PC-3 (cell line): ENCODE measurements at regions of chr3 and their contacts with region 1.

Region 1: GRCh38 chr3:97658668-97659285 is 105.8 kb upstream of the ARL6 start:
- DNase-seq: peak; percentile 61
- ATAC-seq: peak; percentile 73
- H3K4me3 ChIP-seq: no peak overlapping the region
- H3K27ac ChIP-seq: no peak overlapping the region
- H3K4me1 ChIP-seq: no peaks in the 10 kb centered on the region
- H3K27me3 ChIP-seq: no peaks in the 10 kb centered on the region
- CTCF ChIP-seq: peak; percentile 91

Region 2: DNA sequence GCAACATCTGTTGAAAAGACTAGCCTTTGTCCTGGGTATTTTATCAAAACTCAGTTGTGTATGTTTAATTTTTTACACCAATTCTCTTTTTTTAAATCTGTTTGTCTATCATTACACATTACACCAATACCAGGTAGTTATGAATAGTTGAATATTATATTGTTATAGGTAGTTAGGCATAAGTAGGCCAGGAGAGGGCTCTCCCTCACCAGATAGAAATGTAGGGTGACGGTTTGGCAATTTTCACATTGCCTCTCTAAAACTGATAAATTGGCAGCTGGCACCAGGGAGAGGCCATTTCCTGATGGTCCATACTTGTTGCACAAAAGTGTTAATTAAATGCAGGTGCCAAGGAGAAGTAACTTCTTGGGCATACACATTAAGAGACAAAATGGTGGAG is 1327.4 kb before region 1 on chr3:
- CTCF ChIA-PET with region 1: no interaction called
- POLR2A ChIA-PET with region 1: no interaction called
- intact Hi-C with region 1: loop called (anchors 10 kb)
- DNase-seq: peak; percentile 59
- ATAC-seq: peak; percentile 75
- H3K4me3 ChIP-seq: no peak overlapping the region
- H3K27ac ChIP-seq: no peak overlapping the region
- H3K4me1 ChIP-seq: peaks cover 6% of the 10 kb centered on the region; the same call in 1 of the 2 replicates
- H3K27me3 ChIP-seq: no peaks in the 10 kb centered on the region
- CTCF ChIP-seq: peak; percentile 75

Region 3: DNA sequence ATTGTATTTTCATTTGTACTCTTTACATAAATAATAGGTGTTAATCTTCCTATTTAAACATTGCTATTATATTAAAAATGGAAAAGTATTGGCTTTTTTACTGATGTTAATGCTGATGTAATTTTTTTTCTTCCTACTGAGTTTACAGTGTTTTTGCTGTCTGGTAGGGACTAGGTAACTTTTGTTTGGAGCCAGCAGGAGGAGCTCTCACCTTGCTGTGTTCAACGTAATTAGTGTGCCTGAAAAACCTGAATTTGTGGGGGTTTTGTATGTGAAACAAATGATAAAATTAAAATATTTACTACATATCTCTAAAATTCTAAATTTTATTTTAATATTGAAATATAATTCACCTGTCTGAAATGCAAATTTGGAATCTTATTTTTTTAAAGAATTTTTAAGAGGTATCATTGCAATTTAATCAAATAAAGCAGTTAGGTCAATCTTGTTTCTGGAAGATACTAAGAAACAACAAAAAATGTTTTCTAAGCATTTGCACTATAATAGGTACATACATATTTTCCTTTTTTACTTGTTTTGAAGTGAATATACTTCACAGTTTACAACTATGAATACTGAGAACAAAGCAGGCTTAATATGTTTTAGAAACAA is 795.5 kb before region 1 on chr3:
- CTCF ChIA-PET with region 1: no interaction called
- POLR2A ChIA-PET with region 1: no interaction called
- intact Hi-C with region 1: loop called (anchors 1 kb)
- DNase-seq: peak; percentile 63
- ATAC-seq: peak; percentile 67
- H3K4me3 ChIP-seq: no peak overlapping the region
- H3K27ac ChIP-seq: no peak overlapping the region
- H3K4me1 ChIP-seq: no peaks in the 10 kb centered on the region
- H3K27me3 ChIP-seq: no peaks in the 10 kb centered on the region
- CTCF ChIP-seq: peak; percentile 78

Region 4: DNA sequence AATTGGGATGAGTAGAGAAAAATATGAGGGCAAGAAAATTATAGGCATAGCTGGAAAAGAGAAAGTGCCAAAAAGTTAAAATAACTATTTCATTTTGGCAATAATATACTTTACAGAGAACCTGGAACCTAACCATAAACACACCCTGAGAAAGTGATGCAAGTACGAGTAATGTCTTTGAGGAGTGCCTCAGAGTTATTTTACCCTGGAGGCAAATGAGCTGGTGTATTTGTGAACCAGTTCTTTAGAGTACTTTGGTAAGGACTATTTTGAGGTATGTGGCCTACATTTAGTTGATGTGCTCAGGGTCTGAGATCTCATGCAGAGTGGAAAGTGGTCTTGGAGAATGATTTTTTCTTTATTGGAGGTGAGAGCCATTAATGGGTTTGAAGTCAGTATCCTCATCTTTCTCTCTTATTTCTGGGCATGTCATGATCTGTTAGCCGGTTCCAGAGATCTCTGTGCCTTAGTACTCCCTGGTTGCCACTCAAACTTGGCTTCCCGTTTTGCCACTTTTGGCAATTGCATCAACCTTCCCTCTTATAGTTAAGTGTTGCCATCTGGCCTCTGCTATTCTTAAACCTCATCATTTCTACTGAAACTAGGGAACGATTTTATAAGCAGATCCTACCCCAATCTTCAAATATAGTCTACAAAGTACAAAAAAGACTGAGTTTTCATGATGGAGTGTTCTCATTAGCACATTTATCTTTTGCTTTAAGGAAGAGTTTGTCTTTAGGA is 698.7 kb before region 1 on chr3:
- CTCF ChIA-PET with region 1: no interaction called
- POLR2A ChIA-PET with region 1: no interaction called
- intact Hi-C with region 1: loop called (anchors 5 kb)
- DNase-seq: peak; percentile 80
- ATAC-seq: peak; percentile 92
- H3K4me3 ChIP-seq: no peak overlapping the region
- H3K27ac ChIP-seq: peak overlapping the region; percentile 60
- H3K4me1 ChIP-seq: peaks cover 18% of the 10 kb centered on the region
- H3K27me3 ChIP-seq: no peaks in the 10 kb centered on the region
- CTCF ChIP-seq: no peak

Region 5: DNA sequence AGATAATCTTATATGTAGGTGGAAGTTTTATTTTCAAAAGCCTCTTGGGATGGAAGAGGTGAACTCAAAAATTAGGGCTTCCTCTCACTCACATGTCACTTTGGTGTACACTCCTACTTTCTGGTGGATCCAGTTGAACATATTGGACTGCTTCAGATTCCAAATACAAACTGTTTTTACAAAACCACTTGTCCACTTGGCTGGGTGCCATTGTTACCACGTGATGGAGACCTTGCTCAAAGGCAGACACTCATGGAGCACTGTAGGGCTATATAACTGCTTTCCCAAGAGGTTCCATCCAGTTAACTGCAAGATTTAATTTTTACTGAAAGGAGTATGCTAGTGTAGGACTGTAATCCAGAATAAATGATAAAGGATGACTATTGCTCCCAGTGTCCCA is 537.4 kb before region 1 on chr3:
- CTCF ChIA-PET with region 1: no interaction called
- POLR2A ChIA-PET with region 1: no interaction called
- intact Hi-C with region 1: no loop called
- DNase-seq: no peak
- ATAC-seq: no peak
- H3K4me3 ChIP-seq: no peak overlapping the region
- H3K27ac ChIP-seq: no peak overlapping the region
- H3K4me1 ChIP-seq: no peaks in the 10 kb centered on the region
- H3K27me3 ChIP-seq: no peaks in the 10 kb centered on the region
- CTCF ChIP-seq: no peak

Region 6: DNA sequence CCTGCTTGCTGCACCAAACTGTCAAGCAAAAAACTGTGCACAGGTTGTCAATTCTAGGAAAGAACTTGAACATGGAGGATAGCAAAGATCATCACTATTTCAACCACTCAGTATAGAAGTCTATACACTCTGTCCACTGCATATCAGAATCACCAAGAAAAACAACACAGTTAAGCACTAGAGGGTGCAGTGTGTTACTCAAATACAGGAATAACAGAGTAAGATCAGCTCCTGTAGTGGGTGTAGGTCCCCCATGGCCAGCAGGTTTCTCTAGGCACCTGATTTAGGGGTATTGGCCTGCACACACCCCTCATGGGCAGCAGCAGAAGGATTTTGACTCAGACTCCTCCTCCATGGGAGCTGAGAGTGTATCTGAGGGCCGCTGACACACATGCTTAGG is 380.3 kb before region 1 on chr3:
- CTCF ChIA-PET with region 1: no interaction called
- POLR2A ChIA-PET with region 1: no interaction called
- intact Hi-C with region 1: loop called (anchors 1 kb)
- DNase-seq: no peak
- ATAC-seq: peak; percentile 91
- H3K4me3 ChIP-seq: no peak overlapping the region
- H3K27ac ChIP-seq: no peak overlapping the region
- H3K4me1 ChIP-seq: no peaks in the 10 kb centered on the region
- H3K27me3 ChIP-seq: no peaks in the 10 kb centered on the region
- CTCF ChIP-seq: peak; percentile 23; the same call in 1 of the 2 replicates

Region 7: DNA sequence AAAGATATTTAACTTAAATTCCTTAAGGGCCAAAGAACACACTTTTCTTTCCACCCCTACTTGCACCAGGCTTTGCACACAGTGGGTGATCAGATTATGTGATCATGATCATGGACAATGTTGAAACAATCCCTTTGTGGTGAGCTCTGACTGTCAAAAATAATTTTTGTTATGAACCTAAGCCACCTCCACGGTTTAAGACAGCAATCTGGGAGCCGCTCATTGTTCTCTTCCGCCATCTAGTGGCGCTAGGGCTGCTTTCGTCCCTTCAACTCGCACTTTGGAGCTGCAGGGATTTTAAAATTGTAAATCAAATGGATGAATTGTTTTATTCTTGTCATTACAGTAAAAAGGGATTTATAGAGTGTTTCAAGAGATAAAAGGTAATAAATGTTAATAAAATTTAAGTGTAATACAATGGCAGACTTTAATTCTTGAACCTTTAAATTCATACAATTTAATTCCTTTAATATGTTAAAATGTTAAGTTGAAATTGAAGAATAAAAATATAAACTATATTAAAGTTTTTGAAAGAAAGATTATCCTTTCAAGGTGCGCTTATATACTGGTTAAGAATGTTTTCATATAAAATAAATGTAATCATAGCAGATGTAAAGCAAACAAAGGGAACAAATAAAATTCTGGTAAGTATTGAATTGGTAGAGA is 60.5 kb after region 1 on chr3:
- CTCF ChIA-PET with region 1: interaction called, 3 read pairs
- POLR2A ChIA-PET with region 1: no interaction called
- intact Hi-C with region 1: loop called (anchors 1 kb)
- DNase-seq: peak; percentile 88
- ATAC-seq: peak; percentile 94
- H3K4me3 ChIP-seq: peak overlapping the region; percentile 37; the same call in 1 of the 2 replicates
- H3K27ac ChIP-seq: no peak overlapping the region
- H3K4me1 ChIP-seq: no peaks in the 10 kb centered on the region
- H3K27me3 ChIP-seq: no peaks in the 10 kb centered on the region
- CTCF ChIP-seq: peak; percentile 98

Region 8: DNA sequence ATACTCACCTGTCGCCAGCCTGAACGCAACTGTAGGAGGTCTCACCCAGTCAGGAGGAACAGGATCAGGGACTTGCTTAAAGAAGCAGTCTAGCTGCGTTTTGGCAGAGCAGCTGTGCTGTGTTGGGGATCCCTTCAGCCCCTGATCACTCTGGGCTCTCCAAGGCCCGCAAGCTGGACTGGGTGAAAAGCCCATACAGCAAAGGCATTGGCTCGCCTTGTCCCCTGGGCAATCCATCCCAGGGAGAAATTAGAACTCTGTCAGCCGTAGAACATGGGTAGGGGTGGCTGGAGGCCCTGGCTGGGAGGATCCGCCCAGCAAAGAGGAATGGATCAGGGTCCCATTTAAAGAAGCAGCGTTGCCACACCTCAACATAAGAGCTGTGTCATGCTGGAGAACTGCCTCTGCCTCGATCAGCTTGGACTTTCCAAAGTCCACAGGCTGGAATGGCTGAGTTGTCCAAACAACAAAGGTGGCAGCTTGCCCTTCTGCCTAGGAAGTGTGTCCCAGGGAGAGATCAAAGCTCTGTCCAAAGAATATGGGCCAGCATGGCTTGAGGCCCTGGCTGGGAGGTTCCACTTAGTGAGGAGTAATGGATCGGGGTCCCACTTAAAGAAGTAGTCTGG is 632.7 kb after region 1 on chr3:
- CTCF ChIA-PET with region 1: no interaction called
- POLR2A ChIA-PET with region 1: no interaction called
- intact Hi-C with region 1: no loop called
- DNase-seq: no peak
- ATAC-seq: no peak
- H3K4me3 ChIP-seq: no peak overlapping the region
- H3K27ac ChIP-seq: no peak overlapping the region
- H3K4me1 ChIP-seq: no peaks in the 10 kb centered on the region
- H3K27me3 ChIP-seq: peaks cover 6% of the 10 kb centered on the region
- CTCF ChIP-seq: no peak